ENCODE measurements at regions of chr5 and their contacts with region 1.

Region 1: DNA sequence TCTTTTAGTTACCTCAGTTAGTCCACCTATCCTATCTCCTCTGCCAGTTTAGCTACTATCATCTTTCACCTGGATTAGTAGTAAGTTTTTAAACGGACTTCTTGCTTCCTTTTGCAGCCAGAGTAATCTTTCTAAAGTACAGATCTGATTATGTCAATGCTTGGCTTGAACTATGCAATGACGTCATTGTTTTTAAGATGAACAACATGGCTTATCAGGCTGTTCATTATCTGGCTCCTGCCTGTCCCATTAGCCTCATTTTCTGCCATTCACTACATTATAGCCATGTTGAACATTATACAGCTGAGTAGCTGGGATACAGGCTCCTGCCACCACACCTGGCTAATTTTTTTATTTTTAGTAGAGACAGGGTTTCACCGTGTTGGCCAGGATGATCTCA is 98.7 kb downstream of the RANBP17 start:
- DNase-seq: no peak
- H3K4me3 ChIP-seq: no peak overlapping the region
- H3K27ac ChIP-seq: no peak overlapping the region
- H3K4me1 ChIP-seq: no peaks in the 10 kb centered on the region
- H3K27me3 ChIP-seq: no peaks in the 10 kb centered on the region
- CTCF ChIP-seq: no peak
- POLR2A ChIP-seq: no peak

Region 2: DNA sequence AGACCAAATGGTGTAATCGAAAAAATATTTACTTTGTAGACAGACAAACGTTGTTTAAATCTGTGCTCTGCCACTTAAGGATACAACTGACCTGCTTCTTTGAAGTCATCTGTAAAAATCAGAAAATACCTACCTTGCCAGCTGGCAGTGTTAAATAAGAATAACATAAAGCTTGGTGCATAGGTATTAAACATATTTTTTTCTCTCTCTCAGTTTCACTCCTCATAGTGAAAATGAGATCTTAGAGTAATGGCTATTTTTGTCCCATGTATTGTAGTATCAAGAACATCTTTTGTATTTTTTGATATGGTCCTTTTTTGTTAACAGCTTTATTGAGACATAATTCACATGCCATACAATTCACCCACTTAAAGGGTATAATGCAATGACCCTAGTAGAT is 116.7 kb before region 1 on chr5:
- intact Hi-C with region 1: loop called (anchors 5 kb)
- DNase-seq: no peak
- H3K4me3 ChIP-seq: no peak overlapping the region
- H3K27ac ChIP-seq: no peak overlapping the region
- H3K4me1 ChIP-seq: no peaks in the 10 kb centered on the region
- H3K27me3 ChIP-seq: no peaks in the 10 kb centered on the region
- CTCF ChIP-seq: no peak
- POLR2A ChIP-seq: no peak

Region 3: GRCh38 chr5:171137768-171138525 is 177.4 kb after region 1 on chr5:
- intact Hi-C with region 1: loop called (anchors 10 kb)
- DNase-seq: no peak
- H3K4me3 ChIP-seq: no peak overlapping the region
- H3K27ac ChIP-seq: no peak overlapping the region
- H3K4me1 ChIP-seq: no peaks in the 10 kb centered on the region
- H3K27me3 ChIP-seq: no peaks in the 10 kb centered on the region
- CTCF ChIP-seq: no peak
- POLR2A ChIP-seq: no peak